GM18951 (cell line): ENCODE measurements at regions of chr14 and their contacts with region 1.

Region 1: DNA sequence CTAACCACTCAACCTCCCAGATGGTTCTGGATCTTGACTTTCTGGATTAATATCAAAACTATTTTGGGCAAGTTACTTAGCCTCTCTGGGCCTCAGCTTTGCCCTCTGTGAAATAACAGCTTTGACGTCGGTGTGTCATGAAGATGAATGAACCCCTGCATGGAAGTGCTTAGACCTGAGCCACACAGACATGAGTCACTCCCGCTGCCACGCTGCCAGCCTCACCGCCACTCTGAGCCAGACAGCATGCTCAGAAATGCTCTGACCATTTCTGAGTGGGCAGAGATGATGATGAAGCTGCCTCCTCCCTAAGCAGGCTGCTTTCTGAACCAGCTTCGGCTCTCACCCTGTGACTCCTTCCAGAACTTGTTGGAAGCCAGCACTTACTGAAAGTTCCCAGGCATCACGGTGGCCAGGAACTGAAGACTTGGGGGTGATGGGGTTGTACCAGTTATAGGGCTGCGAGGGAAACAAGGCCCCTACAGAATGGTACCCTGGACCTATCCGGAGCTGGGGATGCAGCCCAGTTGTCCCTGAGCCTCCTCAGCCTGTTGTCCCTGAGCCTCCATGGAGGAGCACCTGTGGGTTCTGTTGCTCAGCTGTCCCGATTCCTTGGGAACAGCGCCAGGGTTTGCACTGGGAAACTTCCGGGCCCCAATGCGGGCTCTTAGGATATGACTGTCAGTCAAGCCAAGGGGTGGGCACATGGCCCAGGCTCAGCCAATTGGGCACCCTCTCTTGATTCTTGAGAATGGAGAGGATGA is 2.0 kb upstream of the CCDC197 start:
- POLR2A ChIP-seq: no peak

Region 2: DNA sequence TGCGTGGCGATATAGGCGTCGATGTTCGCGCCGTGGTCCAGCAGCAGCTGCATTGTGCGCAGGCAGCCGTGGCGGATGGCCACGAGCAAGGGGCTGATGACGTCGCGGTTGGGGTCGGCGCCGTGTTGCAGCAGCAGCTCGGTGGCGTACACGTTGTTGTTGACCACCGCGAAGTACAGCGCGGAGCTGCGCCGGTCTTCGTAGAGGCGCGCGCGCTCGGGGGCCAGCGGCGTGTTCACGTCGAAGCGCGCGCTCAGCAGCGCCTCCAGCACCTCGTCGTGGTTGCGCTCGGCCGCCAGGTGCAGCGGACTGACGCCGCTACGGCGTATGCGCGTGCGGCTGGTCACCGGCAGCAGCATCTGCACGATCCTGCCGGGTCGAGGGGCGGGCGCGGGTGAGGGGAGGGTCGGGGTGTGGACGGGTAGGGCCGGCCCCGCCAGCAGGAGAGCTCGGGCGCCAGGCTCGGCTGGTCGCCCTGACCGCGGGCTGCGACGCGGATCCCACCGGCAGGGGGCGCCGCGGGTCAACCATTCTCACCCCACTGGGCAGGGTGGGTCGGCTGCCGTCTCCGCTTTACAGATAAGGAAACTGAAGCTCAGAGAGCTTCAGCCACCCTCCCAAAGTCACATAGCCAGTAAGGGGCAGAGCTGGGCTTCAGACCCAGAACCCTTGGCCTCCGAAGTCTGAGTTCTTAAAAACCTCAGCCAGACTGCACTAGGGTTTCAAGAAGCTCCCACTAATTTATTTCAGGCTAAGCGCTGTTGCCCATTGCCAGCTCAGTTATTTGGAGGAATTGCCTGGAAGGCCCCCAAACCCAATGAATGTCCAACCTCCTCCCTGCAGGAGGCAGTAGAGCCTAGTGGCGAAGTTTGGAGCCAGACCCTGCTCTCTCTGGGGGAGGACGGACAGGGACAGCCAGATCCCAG is 55.5 kb before region 1 on chr14:
- in situ Hi-C with region 1: loop called (anchors 5 kb)
- POLR2A ChIP-seq: no peak